Activated CD8-positive, alpha-beta T cell treated with anti-CD3 and anti-CD28 coated beads, Interleukin-2, amount 10 ng/mL, durations not matched to agents 7 days and 5 days (primary cell): ENCODE measurements at regions of chr3 and their contacts with region 1.

Region 1: DNA sequence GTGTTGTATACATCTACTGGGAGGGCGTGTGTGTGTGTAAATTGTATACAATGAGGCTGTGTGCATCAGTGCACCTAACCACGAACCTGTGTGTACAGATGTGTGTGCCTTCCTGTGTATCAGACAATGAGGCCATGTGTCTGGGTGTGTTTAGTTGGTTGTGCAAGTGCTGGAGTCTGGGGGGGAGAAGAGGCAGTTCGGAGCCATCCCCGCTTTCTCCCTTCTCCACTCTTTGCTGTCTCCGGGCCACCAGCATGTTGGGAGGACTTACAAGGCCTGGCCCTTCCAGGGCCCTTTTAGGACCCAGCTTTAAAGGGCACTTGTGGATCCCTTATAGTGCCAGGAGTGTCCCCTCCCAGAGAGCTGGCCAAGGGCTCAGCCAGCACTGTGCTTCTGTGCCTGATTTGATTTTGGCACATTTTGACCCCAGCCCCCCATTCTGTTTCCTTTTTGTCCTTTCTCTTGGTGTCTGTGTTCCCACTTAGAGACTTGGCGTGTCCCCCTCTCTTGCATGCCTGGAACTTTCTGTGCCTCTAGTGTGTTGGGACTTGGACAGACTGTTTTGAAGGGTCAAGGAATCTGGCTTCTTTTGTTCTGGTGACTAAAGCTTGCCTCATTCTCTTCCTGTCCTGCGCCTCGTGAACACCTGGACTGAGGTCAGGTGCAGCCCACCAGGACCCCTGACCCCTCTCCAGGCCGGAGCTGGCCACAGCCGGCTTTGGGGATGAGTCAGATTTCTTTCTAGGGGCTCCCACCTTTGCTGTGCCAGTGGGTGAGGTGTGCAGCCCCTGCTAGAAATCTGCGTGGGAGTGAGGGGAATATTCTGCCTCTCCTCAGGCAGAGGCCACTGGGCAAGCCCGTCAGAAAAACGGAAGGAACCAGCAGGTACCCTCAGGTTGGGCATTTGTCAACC is 1.5 kb downstream of the CTDSPL start:
- DNase-seq: no peak
- ATAC-seq: no peak
- H3K4me3 Mint-ChIP-seq: peak overlapping the region; percentile 68
- H3K27ac Mint-ChIP-seq: no peak overlapping the region
- H3K4me1 Mint-ChIP-seq: peaks cover 19% of the 10 kb centered on the region
- H3K27me3 Mint-ChIP-seq: peaks cover 52% of the 10 kb centered on the region

Region 2: DNA sequence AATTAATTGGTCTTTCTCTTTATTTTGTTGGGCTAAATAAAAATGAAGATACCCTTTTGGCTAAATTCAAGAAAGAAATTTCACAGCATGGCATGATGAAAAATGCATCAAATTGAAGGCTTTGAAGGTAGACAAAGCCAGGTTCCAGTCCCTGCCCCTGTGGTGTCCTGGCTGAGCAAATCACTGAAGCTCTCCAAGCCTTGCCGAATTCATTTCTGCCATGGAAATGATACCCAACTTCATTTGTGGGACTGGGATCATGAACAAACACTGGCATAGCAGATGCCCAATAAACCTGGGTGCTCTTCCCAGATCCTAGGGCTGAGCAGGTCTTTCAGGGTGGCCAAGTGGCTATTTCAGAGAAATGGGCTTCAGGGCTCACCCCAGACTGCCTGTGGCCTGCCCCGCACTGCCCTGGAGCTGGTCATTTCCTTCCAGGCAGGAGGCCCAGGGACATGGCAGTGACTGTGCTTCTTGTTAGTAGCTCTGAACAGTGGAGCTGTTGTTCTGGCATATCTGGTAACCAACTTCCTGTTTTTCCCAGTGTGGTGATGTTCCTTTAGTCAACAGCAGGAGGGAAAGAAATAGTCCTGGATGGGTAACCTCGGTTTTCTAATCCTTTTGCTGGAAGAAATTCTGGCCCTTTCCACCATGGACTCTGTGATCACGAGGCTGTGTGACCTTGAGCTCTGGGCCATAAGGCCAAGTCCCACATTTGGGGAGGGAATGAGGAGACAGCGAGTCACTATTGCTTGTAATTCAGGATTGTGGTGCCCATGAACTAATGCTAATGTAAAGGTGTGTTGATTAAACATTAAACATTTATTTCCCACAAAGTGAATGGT is 46.1 kb after region 1 on chr3:
- CTCF ChIA-PET with region 1: interaction called, 10 read pairs
- POLR2A ChIA-PET with region 1: no interaction called
- DNase-seq: no peak
- ATAC-seq: no peak
- H3K4me3 Mint-ChIP-seq: no peak overlapping the region
- H3K27ac Mint-ChIP-seq: no peak overlapping the region
- H3K4me1 Mint-ChIP-seq: peaks cover 41% of the 10 kb centered on the region
- H3K27me3 Mint-ChIP-seq: peaks cover 29% of the 10 kb centered on the region